H1 (cell line): ENCODE measurements at regions of chr17 and their contacts with region 1.

Region 1: GRCh38 chr17:4215882-4216570 is 47.8 kb downstream of the ANKFY1 start:
- DNase-seq: no peak
- H3K4me3 ChIP-seq: no peak overlapping the region
- H3K27ac ChIP-seq: no peak overlapping the region
- H3K4me1 ChIP-seq: no peaks in the 10 kb centered on the region
- H3K27me3 ChIP-seq: no peaks in the 10 kb centered on the region
- CTCF ChIP-seq: no peak
- EP300 ChIP-seq: no peak
- POLR2A ChIP-seq: no peak
- RAD21 ChIP-seq: no peak

Region 2: GRCh38 chr17:4045487-4045886 is 170.5 kb before region 1 on chr17:
- CTCF ChIA-PET with region 1: no interaction called
- POLR2A ChIA-PET with region 1: no interaction called
- DNase-seq: no peak
- H3K4me3 ChIP-seq: no peak overlapping the region
- H3K27ac ChIP-seq: no peak overlapping the region
- H3K4me1 ChIP-seq: no peaks in the 10 kb centered on the region
- H3K27me3 ChIP-seq: no peaks in the 10 kb centered on the region
- CTCF ChIP-seq: no peak
- EP300 ChIP-seq: no peak
- POLR2A ChIP-seq: no peak
- RAD21 ChIP-seq: no peak

Region 3: DNA sequence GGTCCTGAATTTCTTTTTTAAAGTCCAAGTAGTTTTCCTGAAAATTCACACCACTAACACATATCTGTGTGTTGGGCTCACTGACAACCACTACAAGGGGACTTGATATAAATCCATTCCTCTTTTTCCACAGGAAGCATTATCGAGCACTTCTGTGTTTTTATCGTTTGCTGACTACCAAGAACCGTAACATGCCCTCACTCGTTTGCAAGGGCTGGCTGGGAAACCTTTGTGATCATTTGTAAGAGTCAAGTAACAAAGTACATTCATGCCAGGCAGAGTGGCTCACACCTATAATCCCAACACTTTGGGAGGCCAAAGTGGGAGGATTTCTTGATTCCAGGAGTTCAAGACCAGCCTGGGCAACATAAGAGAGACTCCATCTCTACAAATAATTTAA is 135.3 kb before region 1 on chr17:
- CTCF ChIA-PET with region 1: no interaction called
- POLR2A ChIA-PET with region 1: no interaction called
- DNase-seq: no peak
- H3K4me3 ChIP-seq: no peak overlapping the region
- H3K27ac ChIP-seq: no peak overlapping the region
- H3K4me1 ChIP-seq: no peaks in the 10 kb centered on the region
- H3K27me3 ChIP-seq: no peaks in the 10 kb centered on the region
- CTCF ChIP-seq: no peak
- EP300 ChIP-seq: no peak
- POLR2A ChIP-seq: no peak
- RAD21 ChIP-seq: no peak

Region 4: GRCh38 chr17:4161179-4161559 is 54.9 kb before region 1 on chr17:
- CTCF ChIA-PET with region 1: interaction called, 10 read pairs
- POLR2A ChIA-PET with region 1: interaction called, 3 read pairs
- DNase-seq: peak in 1 of 2 experiments; percentile 50
- H3K4me3 ChIP-seq: no peak overlapping the region
- H3K27ac ChIP-seq: no peak overlapping the region
- H3K4me1 ChIP-seq: peaks cover 0 to 6% (median 2%) of the 10 kb centered on the region in 4 experiments; a peak in 4 of 7 replicates
- H3K27me3 ChIP-seq: no peaks in the 10 kb centered on the region; a peak in 1 of 7 replicates
- CTCF ChIP-seq: no peak
- EP300 ChIP-seq: no peak
- POLR2A ChIP-seq: no peak
- RAD21 ChIP-seq: no peak

Region 5: DNA sequence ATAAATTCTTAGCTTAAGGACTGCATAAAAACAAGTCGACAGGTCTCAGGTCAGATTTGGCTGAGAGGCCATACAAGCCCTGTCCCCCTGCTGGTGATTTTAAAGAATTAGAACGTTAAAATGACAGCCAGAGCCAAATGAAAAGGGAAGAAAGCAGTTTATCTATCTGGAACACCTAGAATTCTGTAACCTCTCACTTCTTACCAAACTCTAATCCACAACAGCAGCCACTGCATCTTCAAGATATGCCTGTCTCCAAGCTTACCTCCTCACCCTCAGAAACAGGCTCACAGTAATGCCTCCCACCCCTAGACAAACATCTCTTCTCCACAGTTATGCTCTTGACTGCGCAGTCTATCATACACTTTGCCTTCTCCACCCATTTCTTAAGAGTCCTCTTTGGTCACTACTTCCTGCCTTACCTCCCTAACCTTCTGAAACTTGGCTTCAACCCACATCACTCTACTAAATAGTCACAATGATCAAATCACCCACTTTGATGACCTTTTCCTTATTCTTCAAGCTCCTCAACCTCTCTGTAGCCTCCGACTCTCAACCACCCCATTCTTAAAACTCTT is 33.5 kb after region 1 on chr17:
- CTCF ChIA-PET with region 1: interaction called, 38 read pairs
- POLR2A ChIA-PET with region 1: interaction called, 4 read pairs
- DNase-seq: no peak
- H3K4me3 ChIP-seq: no peak overlapping the region
- H3K27ac ChIP-seq: no peak overlapping the region
- H3K4me1 ChIP-seq: peaks cover 0 to 15% (median 10%) of the 10 kb centered on the region in 4 experiments; a peak in 5 of 7 replicates
- H3K27me3 ChIP-seq: no peaks in the 10 kb centered on the region
- CTCF ChIP-seq: peak in 2 of 3 experiments; percentile 52 to 59; a peak in 3 of 4 replicates
- EP300 ChIP-seq: no peak
- POLR2A ChIP-seq: no peak
- RAD21 ChIP-seq: peak; percentile 8 to 31; a peak in 1 of 4 replicates

Region 6: DNA sequence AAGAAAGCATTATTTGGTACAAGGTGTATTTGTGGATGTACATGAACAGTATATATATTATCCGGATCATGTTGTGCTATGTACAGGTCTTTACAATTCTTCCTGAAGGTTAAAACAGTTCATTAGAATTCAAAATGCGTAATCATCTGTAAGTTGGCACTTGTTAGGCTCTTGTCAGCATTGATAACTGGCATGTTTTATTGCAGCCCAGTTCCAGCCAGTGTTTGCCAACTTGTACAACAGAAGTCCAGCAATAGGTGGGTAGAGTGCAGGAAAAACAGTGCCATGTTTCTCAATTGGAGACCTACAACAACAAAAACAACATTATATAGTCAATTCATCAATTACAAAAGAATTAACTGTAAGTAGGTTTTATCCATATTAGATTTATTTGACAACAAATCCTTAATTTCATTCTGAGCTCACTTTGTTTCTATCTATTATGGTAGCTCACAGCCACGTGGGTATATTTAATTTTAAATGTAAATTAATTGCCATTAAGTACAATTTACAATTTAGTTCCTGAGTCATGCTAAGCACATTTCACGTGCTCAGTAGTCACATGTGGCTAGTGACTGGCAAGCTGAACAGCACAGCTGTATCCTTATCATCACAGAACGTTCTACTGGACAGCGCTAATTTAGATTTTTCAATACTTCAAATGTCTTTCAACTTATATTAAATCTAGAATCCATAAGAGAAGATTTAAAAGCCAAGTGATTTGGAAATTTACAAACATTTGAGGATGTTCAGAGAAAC is 56.4 kb after region 1 on chr17:
- CTCF ChIA-PET with region 1: interaction called, 10 read pairs
- POLR2A ChIA-PET with region 1: no interaction called
- DNase-seq: no peak
- H3K4me3 ChIP-seq: no peak overlapping the region
- H3K27ac ChIP-seq: no peak overlapping the region
- H3K4me1 ChIP-seq: peaks cover 0 to 2% (median 0%) of the 10 kb centered on the region in 4 experiments; a peak in 1 of 7 replicates
- H3K27me3 ChIP-seq: no peaks in the 10 kb centered on the region
- CTCF ChIP-seq: no peak
- EP300 ChIP-seq: no peak
- POLR2A ChIP-seq: 0 out of 3 replicates have a peak, but pooled peaks of 1 of the 2 experiments have one; percentile 22
- RAD21 ChIP-seq: no peak

Region 7: GRCh38 chr17:4340914-4341615 is 125.0 kb after region 1 on chr17:
- CTCF ChIA-PET with region 1: no interaction called
- POLR2A ChIA-PET with region 1: no interaction called
- DNase-seq: no peak
- H3K4me3 ChIP-seq: no peak overlapping the region
- H3K27ac ChIP-seq: no peak overlapping the region
- H3K4me1 ChIP-seq: peaks cover 0 to 7% (median under 1%) of the 10 kb centered on the region in 4 experiments; a peak in 4 of 7 replicates
- H3K27me3 ChIP-seq: no peaks in the 10 kb centered on the region
- CTCF ChIP-seq: no peak
- EP300 ChIP-seq: no peak
- POLR2A ChIP-seq: no peak
- RAD21 ChIP-seq: no peak

Region 8: DNA sequence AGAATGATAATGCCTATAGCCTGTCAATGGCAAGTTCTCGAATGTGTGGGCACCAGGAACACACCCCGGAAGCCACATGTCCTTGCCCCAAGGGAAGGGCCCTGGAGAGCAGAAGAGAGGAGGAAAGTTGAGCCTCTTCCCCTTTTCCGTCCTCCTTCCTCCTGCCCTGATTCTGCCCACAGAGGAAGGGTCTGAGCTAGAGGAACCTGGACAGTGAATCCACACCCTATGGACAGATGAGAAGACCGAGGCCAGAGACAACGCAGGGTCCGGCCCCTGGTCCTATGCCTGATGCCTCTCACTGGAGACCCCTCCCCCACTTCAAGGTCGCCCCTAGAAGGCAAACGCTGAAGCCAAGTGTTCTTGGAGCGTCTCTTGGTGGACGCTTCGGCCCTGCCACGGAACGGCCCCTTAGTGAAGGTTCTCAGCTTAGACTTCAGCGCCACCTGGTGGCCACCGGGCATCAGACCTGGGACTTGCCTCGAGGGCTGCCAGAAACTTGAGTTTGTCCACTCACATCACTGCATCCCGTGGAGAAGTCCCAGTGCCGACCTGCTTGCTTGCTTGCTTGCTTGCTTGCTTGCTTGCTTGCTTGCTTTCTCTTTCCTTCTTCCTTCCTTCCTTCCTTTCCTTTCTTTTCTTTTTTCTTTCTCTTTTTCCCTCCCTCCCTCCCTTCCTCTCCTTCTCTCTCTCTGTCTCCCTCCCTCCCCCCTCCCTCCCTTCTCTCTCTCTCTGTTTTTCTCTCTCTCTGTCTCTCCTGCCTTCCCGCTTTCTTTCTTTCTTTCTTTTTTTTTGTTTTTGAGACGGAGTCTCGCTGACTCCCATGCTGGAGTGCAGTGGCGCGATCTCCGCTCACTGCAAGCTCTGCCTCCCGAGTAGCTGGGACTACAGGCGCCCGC is 197.2 kb after region 1 on chr17:
- CTCF ChIA-PET with region 1: interaction called, 16 read pairs
- POLR2A ChIA-PET with region 1: no interaction called
- DNase-seq: peak; percentile 91 to 99
- H3K4me3 ChIP-seq: no peak overlapping the region
- H3K27ac ChIP-seq: no peak overlapping the region
- H3K4me1 ChIP-seq: peaks cover 0 to 4% (median 2%) of the 10 kb centered on the region in 4 experiments; a peak in 4 of 7 replicates
- H3K27me3 ChIP-seq: no peaks in the 10 kb centered on the region
- CTCF ChIP-seq: peak; percentile 87 to 99 (median 99)
- EP300 ChIP-seq: peak in 1 of 2 experiments; percentile 51; a peak in 1 of 3 replicates
- POLR2A ChIP-seq: no peak
- RAD21 ChIP-seq: peak; percentile 99 to 100